ENCODE measurements at regions of chr15 and their contacts with region 1.

Region 1: DNA sequence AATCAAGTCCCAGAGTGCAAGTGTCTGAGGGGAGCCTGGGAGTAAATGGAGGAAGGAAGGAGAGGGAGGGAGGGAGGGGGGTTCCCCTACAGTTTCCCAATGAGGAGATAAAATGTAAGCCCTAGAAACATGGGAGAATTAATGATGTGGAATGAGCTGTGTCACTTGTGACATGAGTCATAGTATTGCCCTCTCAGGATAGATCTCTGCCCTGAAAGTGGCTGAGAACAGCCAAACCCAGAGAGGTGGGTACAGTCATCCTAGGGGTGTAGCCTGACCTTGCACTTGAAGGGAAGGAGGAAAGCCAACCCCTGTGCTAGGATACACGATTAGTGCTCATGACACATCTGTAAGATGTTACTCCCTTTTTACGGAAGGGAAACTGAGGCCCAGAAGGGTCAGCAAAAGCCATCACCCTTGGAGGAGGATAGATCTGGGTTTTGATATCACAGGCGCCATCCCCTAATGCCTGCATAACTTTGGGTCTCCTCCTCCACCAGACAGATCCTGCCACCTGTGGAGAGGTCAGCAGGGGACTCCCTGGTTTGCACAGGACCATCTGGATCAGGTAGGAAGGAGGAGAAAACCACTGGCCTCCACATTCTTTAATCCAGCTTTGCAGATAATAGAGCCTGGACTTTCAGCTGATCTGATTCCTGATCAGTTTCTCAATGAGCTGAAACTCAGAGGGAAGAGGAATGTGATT is 23.1 kb upstream of the USP3 start:
- DNase-seq: no peak
- H3K4me3 Mint-ChIP-seq: no peak overlapping the region
- H3K27ac Mint-ChIP-seq: no peak overlapping the region
- H3K4me1 Mint-ChIP-seq: peaks cover 67% of the 10 kb centered on the region
- H3K27me3 Mint-ChIP-seq: no peaks in the 10 kb centered on the region

Region 2: DNA sequence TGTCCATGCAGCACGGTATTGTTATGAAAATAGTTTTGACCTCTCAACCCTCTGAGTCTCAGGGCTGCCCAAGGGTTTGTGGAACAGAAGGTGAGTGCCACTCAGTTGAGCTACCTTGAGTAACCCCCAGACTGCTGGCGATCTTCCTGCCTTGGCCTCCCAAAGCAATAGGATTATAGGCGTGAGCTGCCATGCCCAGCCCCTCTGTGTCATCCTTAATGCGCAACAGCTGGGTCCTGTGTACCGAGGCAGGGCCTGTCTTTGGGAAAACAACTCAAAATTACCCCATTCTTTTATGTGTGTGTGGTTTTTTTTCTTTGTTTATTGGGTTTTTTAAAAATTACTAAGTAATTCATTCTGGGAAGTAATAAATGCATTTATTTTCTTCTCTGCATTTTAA is 517.0 kb before region 1 on chr15:
- CTCF ChIA-PET with region 1: no interaction called
- POLR2A ChIA-PET with region 1: no interaction called
- DNase-seq: no peak
- H3K4me3 Mint-ChIP-seq: no peak overlapping the region
- H3K27ac Mint-ChIP-seq: no peak overlapping the region
- H3K4me1 Mint-ChIP-seq: no peaks in the 10 kb centered on the region
- H3K27me3 Mint-ChIP-seq: no peaks in the 10 kb centered on the region

Region 3: DNA sequence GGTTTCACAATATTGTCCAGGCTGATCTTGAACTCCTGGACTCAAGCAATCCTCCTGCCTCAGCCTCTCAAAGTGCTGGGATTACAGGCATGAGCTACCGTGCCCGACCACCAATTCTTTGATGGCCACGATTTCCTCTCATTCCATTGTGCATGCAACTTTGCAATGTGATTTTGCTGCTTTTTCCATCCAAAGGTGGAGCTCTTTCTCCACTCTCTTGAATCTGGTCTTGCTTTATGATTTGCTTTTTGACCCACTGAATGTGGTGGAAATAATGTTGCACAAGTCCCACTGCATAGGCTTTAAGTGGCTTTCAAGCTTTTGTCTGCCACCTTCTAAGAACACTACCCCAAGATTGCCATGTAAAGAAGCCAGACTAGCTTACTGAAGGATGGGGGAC is 334.6 kb before region 1 on chr15:
- CTCF ChIA-PET with region 1: no interaction called
- POLR2A ChIA-PET with region 1: no interaction called
- DNase-seq: no peak
- H3K4me3 Mint-ChIP-seq: no peak overlapping the region
- H3K27ac Mint-ChIP-seq: no peak overlapping the region
- H3K4me1 Mint-ChIP-seq: peaks cover 4% of the 10 kb centered on the region
- H3K27me3 Mint-ChIP-seq: no peaks in the 10 kb centered on the region

Region 4: GRCh38 chr15:63456258-63456657 is 25.0 kb before region 1 on chr15:
- CTCF ChIA-PET with region 1: no interaction called
- POLR2A ChIA-PET with region 1: no interaction called
- DNase-seq: no peak
- H3K4me3 Mint-ChIP-seq: no peak overlapping the region
- H3K27ac Mint-ChIP-seq: no peak overlapping the region
- H3K4me1 Mint-ChIP-seq: peaks cover 7% of the 10 kb centered on the region
- H3K27me3 Mint-ChIP-seq: peaks cover 7% of the 10 kb centered on the region

Region 5: DNA sequence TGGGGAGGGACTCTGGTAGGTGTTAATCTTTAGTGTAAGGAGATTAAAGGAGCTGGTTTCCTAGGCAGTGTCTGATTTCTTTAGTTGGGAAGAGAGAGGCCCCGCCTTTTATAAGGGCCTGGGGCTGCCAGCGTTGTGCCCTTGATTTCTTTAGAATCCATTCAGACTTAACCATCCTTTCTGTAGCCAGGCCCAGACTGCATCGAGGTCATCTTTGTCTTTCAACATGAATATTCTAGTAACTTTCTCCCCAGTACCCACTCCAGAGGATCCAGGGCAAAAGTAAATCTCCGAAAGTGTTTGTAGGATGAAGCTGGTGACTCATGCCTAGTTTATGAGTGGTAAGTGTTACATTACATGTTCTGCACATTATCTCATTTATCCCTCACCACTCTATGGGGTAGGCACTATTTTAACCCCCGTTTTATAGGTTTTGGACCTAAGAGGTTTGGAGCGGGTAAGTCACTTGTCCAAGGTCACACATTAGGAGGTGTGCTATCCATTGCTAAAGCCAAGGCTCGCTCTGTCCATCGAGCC is 11.4 kb after region 1 on chr15:
- CTCF ChIA-PET with region 1: interaction called, 36 read pairs
- POLR2A ChIA-PET with region 1: interaction called, 30 read pairs
- DNase-seq: no peak
- H3K4me3 Mint-ChIP-seq: no peak overlapping the region
- H3K27ac Mint-ChIP-seq: no peak overlapping the region
- H3K4me1 Mint-ChIP-seq: peaks cover 48% of the 10 kb centered on the region
- H3K27me3 Mint-ChIP-seq: peaks cover 2% of the 10 kb centered on the region

Region 6: DNA sequence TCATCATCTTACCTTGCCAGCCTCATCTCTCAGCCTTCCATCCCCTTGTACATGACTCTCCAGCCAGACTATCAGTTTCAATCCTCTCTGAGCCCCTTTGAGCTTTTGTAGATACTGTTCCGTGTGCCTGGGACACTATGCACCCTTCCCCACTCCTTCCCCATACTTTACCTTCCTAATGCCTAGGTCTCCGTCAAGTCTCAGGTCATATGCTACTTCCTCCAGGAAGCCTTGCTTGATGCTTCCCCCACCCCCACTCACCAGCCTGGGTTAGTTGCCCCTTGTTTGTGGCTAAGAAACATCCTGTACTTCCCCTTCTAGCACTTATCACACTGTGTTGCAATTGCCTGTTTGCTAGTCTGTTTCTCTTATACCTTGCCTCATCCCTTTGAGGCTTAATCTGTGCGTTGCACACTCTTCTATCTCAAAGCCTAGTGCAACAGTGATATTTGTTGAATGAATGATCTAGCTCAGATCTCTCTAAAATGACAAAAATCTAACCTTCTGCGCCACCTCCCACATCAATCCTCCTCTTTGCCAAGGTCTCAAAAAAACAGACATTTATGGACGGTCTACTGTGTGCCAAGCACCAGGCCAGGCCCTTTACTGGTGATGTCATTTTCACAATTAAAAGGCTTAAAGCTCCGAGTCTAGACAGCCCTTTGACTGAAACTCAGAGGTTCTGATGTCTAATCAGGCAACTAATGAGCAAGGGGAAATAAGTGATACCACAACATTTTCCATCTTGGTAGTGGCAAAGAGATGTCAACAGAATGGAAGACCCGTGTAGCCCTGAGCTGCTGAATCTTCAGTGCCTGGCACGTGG is 16.6 kb after region 1 on chr15:
- CTCF ChIA-PET with region 1: interaction called, 36 read pairs
- POLR2A ChIA-PET with region 1: interaction called, 175 read pairs
- DNase-seq: peak; percentile 71
- H3K4me3 Mint-ChIP-seq: no peak overlapping the region
- H3K27ac Mint-ChIP-seq: no peak overlapping the region
- H3K4me1 Mint-ChIP-seq: peaks cover 74% of the 10 kb centered on the region
- H3K27me3 Mint-ChIP-seq: no peaks in the 10 kb centered on the region

Region 7: GRCh38 chr15:63600616-63601025 is 119.4 kb after region 1 on chr15:
- CTCF ChIA-PET with region 1: interaction called, 7 read pairs
- POLR2A ChIA-PET with region 1: interaction called, 10 read pairs
- DNase-seq: peak; percentile 91
- H3K4me3 Mint-ChIP-seq: peak overlapping the region; percentile 89
- H3K27ac Mint-ChIP-seq: peak overlapping the region; percentile 87
- H3K4me1 Mint-ChIP-seq: peaks cover 56% of the 10 kb centered on the region
- H3K27me3 Mint-ChIP-seq: no peaks in the 10 kb centered on the region